Esophagus muscularis mucosa (tissue), 4 donors: ENCODE measurements at regions of chr5 and their contacts with region 1.

Region 1: DNA sequence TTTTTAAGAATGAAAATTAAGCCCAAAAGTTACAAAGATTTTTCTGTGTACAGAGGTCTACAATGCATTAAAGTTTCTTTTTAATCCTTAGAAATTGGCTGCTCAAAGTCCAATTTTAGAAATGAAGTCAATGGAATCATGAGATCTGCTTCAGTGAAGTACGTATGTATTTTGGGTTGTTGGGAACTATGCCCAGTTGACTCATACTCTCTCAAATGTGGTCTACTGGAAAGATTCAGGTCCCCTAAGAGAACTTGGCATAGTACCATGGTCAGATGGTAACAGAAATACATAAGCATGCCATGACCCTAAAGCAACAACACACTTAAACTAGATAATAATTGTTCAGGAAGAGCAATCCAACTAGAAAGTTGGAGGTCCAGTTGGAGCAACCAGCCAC is 23.0 kb downstream of the FBLL1 start:
- DNase-seq: no peak
- H3K4me3 ChIP-seq: no peak overlapping the region
- H3K27ac ChIP-seq: no peak overlapping the region
- H3K4me1 ChIP-seq: peaks cover 0 to 13% (median 6%) of the 10 kb centered on the region in 4 donors
- H3K27me3 ChIP-seq: no peaks in the 10 kb centered on the region
- CTCF ChIP-seq: no peak
- EP300 ChIP-seq: no peak
- POLR2A ChIP-seq: no peak

Region 2: DNA sequence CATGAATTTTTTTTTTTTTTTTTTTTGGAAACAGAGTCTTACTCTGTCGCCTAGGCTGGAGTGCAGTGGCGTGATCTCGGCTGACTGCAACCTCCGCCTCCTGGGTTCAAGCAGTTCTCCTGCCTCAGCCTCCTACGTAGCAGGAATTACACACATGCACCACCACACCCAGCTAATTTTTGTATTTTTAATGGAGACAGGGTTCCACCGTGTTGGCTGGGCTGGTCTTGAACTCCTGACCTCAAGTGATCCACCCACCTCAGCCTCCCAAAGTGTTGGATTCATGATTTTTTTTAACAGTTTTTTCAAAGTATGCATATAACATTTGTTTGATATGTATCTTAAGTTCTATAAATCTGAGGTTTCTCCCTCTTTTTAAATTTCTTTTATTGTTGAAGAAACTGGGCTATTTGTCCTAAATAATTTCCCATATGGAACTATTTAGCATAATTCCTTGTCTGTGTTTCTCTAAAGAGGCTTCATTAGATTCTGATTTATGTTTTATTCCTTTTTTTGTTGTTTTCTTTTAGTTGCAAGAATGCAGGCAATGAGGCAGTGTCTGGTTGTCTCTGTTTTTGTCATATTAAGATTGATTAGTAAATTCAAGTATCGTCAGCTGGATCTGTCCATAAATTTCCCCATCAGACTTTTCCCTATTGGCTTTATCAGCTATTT is 49.4 kb before region 1 on chr5:
- intact Hi-C with region 1: loop called (anchors 10 kb)
- DNase-seq: no peak
- H3K4me3 ChIP-seq: no peak overlapping the region
- H3K27ac ChIP-seq: no peak overlapping the region
- H3K4me1 ChIP-seq: no peaks in the 10 kb centered on the region
- H3K27me3 ChIP-seq: no peaks in the 10 kb centered on the region
- CTCF ChIP-seq: no peak
- EP300 ChIP-seq: no peak
- POLR2A ChIP-seq: no peak